Mammary epithelial cell (primary cell): ENCODE measurements at regions of chr2 and their contacts with region 1.

Region 1: DNA sequence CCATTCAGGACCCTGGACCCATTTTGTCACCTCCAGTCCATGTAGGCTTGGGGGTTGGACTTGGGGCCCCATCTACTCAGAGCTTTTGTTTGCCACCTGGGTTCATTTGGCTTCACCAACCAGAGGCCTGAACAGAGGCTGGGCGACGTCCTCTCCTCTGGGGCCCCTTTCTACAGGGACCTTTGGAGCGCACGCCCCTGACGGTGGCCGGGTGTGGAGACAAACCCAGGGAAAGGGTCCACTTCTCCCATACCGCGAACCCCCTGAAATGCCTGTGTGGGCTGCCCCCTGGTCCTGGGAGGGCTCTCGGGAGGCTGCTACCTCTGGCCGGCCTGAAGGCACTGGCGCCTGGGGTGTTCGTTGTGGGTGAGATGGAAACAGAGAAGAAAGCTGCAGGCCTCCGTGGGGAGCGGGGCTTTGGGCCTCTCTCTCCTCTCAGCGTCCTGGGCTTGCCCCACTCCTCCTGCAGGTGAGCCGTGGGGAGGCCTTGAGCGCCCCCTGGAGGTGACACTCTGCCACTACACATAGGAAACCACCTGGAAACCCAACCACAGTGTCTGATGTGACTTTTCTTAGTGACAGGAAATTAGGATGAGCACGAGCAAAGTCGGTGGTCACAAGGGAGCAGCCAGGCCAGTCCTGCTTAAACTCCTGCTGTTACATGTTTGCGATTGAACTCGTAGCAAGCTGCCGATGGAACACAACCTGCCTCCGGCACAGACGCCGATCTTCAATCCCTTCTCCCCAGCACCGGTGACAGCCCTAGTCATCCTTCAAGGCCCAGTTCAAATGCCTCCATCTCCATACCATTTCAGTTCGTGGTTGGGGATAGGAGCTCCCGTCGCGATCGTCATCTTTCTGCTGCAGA is 12.0 kb upstream of the NTSR2 start:
- DNase-seq: no peak
- H3K4me3 ChIP-seq: no peak overlapping the region
- H3K27ac ChIP-seq: no peak overlapping the region
- H3K4me1 ChIP-seq: no peaks in the 10 kb centered on the region
- H3K27me3 ChIP-seq: peaks cover 8% of the 10 kb centered on the region
- CTCF ChIP-seq: peak; percentile 91 to 92

Region 2: DNA sequence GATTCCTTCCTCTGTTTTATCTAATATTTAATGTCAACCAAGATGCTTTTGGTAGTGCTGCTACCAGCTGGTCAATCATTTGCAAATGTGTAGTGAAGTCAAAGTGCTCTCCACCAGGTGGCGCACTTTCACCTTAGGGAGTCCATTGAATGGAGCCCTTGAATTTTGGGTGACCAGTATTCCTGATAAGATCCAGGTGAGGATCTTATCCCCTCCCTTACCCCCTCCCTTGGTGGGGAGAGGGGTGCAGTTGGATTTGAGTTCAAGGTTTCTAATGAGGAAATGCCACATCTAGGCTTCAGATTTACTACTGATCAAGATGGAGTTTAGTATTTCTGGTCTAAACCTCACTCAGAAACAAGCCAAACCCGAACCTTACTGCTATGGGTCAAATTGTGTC is 204.0 kb before region 1 on chr2:
- CTCF ChIA-PET with region 1: interaction called, 3 read pairs
- dilution Hi-C with region 1: no loop called
- in situ Hi-C with region 1: no loop called
- intact Hi-C with region 1: loop called (anchors 2 kb)
- DNase-seq: peak; percentile 64
- H3K4me3 ChIP-seq: no peak overlapping the region
- H3K27ac ChIP-seq: no peak overlapping the region
- H3K4me1 ChIP-seq: peaks cover 5% of the 10 kb centered on the region
- H3K27me3 ChIP-seq: peaks cover 10% of the 10 kb centered on the region
- CTCF ChIP-seq: peak; percentile 73 to 87

Region 3: GRCh38 chr2:11583840-11584524 is 98.0 kb before region 1 on chr2:
- CTCF ChIA-PET with region 1: no interaction called
- dilution Hi-C with region 1: no loop called
- in situ Hi-C with region 1: no loop called
- intact Hi-C with region 1: loop called (anchors 2 kb)
- DNase-seq: peak; percentile 95
- H3K4me3 ChIP-seq: no peak overlapping the region
- H3K27ac ChIP-seq: peak overlapping the region; percentile 30
- H3K4me1 ChIP-seq: peaks cover 4% of the 10 kb centered on the region
- H3K27me3 ChIP-seq: no peaks in the 10 kb centered on the region
- CTCF ChIP-seq: peak; percentile 78 to 92

Region 4: GRCh38 chr2:11710234-11710975 is 28.4 kb after region 1 on chr2:
- CTCF ChIA-PET with region 1: no interaction called
- dilution Hi-C with region 1: no loop called
- in situ Hi-C with region 1: no loop called
- intact Hi-C with region 1: loop called (anchors 1 kb)
- DNase-seq: peak; percentile 80
- H3K4me3 ChIP-seq: no peak overlapping the region
- H3K27ac ChIP-seq: no peak overlapping the region
- H3K4me1 ChIP-seq: peaks cover 22% of the 10 kb centered on the region
- H3K27me3 ChIP-seq: no peaks in the 10 kb centered on the region
- CTCF ChIP-seq: no peak

Region 5: GRCh38 chr2:11764359-11764758 is 82.4 kb after region 1 on chr2:
- CTCF ChIA-PET with region 1: no interaction called
- dilution Hi-C with region 1: loop called (anchors 5 kb)
- in situ Hi-C with region 1: no loop called
- intact Hi-C with region 1: no loop called
- DNase-seq: no peak
- H3K4me3 ChIP-seq: no peak overlapping the region
- H3K27ac ChIP-seq: no peak overlapping the region
- H3K4me1 ChIP-seq: no peaks in the 10 kb centered on the region
- H3K27me3 ChIP-seq: no peaks in the 10 kb centered on the region
- CTCF ChIP-seq: no peak

Region 6: GRCh38 chr2:11784747-11785610 is 103.0 kb after region 1 on chr2:
- CTCF ChIA-PET with region 1: no interaction called
- dilution Hi-C with region 1: loop called (anchors 5 kb)
- in situ Hi-C with region 1: no loop called
- intact Hi-C with region 1: no loop called
- DNase-seq: peak; percentile 23
- H3K4me3 ChIP-seq: no peak overlapping the region
- H3K27ac ChIP-seq: no peak overlapping the region
- H3K4me1 ChIP-seq: no peaks in the 10 kb centered on the region
- H3K27me3 ChIP-seq: no peaks in the 10 kb centered on the region
- CTCF ChIP-seq: peak; percentile 70 to 80